A673 (cell line): ENCODE measurements at regions of chr11 and their contacts with region 1.

Region 1: GRCh38 chr11:11538277-11538960 is 83.4 kb downstream of the GALNT18 start:
- DNase-seq: no peak
- H3K4me3 ChIP-seq: no peak overlapping the region
- H3K27ac ChIP-seq: no peak overlapping the region
- H3K4me1 ChIP-seq: no peaks in the 10 kb centered on the region
- H3K27me3 ChIP-seq: no peaks in the 10 kb centered on the region
- CTCF ChIP-seq: no peak

Region 2: GRCh38 chr11:11519184-11519583 is 19.2 kb before region 1 on chr11:
- CTCF ChIA-PET with region 1: no interaction called
- POLR2A ChIA-PET with region 1: no interaction called
- intact Hi-C with region 1: no loop called
- DNase-seq: no peak
- H3K4me3 ChIP-seq: no peak overlapping the region
- H3K27ac ChIP-seq: no peak overlapping the region
- H3K4me1 ChIP-seq: no peaks in the 10 kb centered on the region
- H3K27me3 ChIP-seq: no peaks in the 10 kb centered on the region
- CTCF ChIP-seq: no peak

Region 3: GRCh38 chr11:11659567-11660362 is 121.3 kb after region 1 on chr11:
- CTCF ChIA-PET with region 1: no interaction called
- POLR2A ChIA-PET with region 1: interaction called, 12 read pairs
- intact Hi-C with region 1: no loop called
- DNase-seq: no peak
- H3K4me3 ChIP-seq: no peak overlapping the region
- H3K27ac ChIP-seq: no peak overlapping the region
- H3K4me1 ChIP-seq: no peaks in the 10 kb centered on the region
- H3K27me3 ChIP-seq: peaks cover 16% of the 10 kb centered on the region
- CTCF ChIP-seq: peak; percentile 36; the same call in 1 of the 2 replicates